GM12878 (cell line): ENCODE measurements at regions of chr12 and their contacts with region 1.

Region 1: GRCh38 chr12:10140001-10140400 is 10.0 kb upstream of the CLEC7A start:
- DNase-seq: peak; percentile 48
- ATAC-seq: peak; percentile 47; the same call in 2 of the 3 replicates
- H3K4me3 ChIP-seq: no peak overlapping the region
- H3K27ac ChIP-seq: no peak overlapping the region
- H3K4me1 ChIP-seq: no peaks in the 10 kb centered on the region
- H3K27me3 ChIP-seq: no peaks in the 10 kb centered on the region; a peak in 1 of 4 replicates
- CTCF ChIP-seq: peak; percentile 47 to 77 (median 57); a peak in 5 of 6 replicates
- EP300 ChIP-seq: no peak
- POLR2A ChIP-seq: no peak
- RAD21 ChIP-seq: peak; percentile 97

Region 2: DNA sequence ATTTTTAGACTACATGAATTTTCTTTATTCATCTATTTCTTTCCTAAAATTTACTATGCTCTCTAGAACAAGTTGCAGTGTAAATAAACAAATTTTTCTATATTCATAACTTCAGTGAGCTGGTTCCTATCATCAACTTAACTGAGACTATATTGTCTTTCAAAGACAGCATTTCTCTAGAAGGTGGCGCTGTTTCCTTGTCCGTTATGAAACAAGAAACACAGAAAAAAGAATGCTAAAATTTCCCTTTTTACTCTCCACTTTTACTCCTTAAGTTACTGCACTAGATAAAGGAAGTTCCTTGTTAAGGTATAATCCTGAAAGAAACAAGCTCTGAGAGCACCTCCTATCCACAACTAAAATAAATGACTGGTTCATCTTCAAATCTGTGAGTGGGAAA is 199.6 kb before region 1 on chr12:
- CTCF ChIA-PET with region 1: interaction called, 13 read pairs
- POLR2A ChIA-PET with region 1: no interaction called
- RAD21 ChIA-PET with region 1: interaction called, 9 read pairs
- SMC1A ChIA-PET with region 1: interaction called, 11 read pairs
- in situ Hi-C with region 1: no loop called
- intact Hi-C with region 1: no loop called
- DNase-seq: no peak
- ATAC-seq: no peak
- H3K4me3 ChIP-seq: no peak overlapping the region
- H3K27ac ChIP-seq: no peak overlapping the region
- H3K4me1 ChIP-seq: no peaks in the 10 kb centered on the region
- H3K27me3 ChIP-seq: peaks cover 0 to 3% of the 10 kb centered on the region in 2 experiments; a peak in 2 of 4 replicates
- CTCF ChIP-seq: peak; percentile 39 to 47 (median 47); a peak in 5 of 6 replicates
- EP300 ChIP-seq: no peak
- POLR2A ChIP-seq: no peak
- RAD21 ChIP-seq: peak; percentile 61

Region 3: GRCh38 chr12:10016881-10017280 is 123.1 kb before region 1 on chr12:
- CTCF ChIA-PET with region 1: interaction called, 5 read pairs
- POLR2A ChIA-PET with region 1: no interaction called
- RAD21 ChIA-PET with region 1: no interaction called
- SMC1A ChIA-PET with region 1: interaction called, 19 read pairs
- in situ Hi-C with region 1: no loop called
- intact Hi-C with region 1: no loop called
- DNase-seq: no peak
- ATAC-seq: no peak
- H3K4me3 ChIP-seq: no peak overlapping the region
- H3K27ac ChIP-seq: no peak overlapping the region
- H3K4me1 ChIP-seq: no peaks in the 10 kb centered on the region
- H3K27me3 ChIP-seq: peaks cover 0 to 4% of the 10 kb centered on the region in 2 experiments; a peak in 1 of 4 replicates
- CTCF ChIP-seq: no peak
- EP300 ChIP-seq: no peak
- POLR2A ChIP-seq: no peak
- RAD21 ChIP-seq: no peak

Region 4: GRCh38 chr12:10033783-10034545 is 106.0 kb before region 1 on chr12:
- CTCF ChIA-PET with region 1: interaction called, 15 read pairs
- POLR2A ChIA-PET with region 1: no interaction called
- RAD21 ChIA-PET with region 1: interaction called, 8 read pairs
- SMC1A ChIA-PET with region 1: interaction called, 21 read pairs
- in situ Hi-C with region 1: loop called (anchors 5 kb)
- intact Hi-C with region 1: loop called (anchors 1 kb)
- DNase-seq: no peak
- ATAC-seq: no peak
- H3K4me3 ChIP-seq: no peak overlapping the region
- H3K27ac ChIP-seq: no peak overlapping the region
- H3K4me1 ChIP-seq: no peaks in the 10 kb centered on the region
- H3K27me3 ChIP-seq: no peaks in the 10 kb centered on the region; a peak in 1 of 4 replicates
- CTCF ChIP-seq: peak; percentile 19 to 49 (median 32); a peak in 4 of 6 replicates
- EP300 ChIP-seq: no peak
- POLR2A ChIP-seq: no peak
- RAD21 ChIP-seq: peak; percentile 69

Region 5: GRCh38 chr12:10058387-10058786 is 81.6 kb before region 1 on chr12:
- CTCF ChIA-PET with region 1: no interaction called
- POLR2A ChIA-PET with region 1: no interaction called
- RAD21 ChIA-PET with region 1: no interaction called
- SMC1A ChIA-PET with region 1: no interaction called
- in situ Hi-C with region 1: no loop called
- intact Hi-C with region 1: no loop called
- DNase-seq: no peak
- ATAC-seq: no peak
- H3K4me3 ChIP-seq: no peak overlapping the region
- H3K27ac ChIP-seq: no peak overlapping the region
- H3K4me1 ChIP-seq: no peaks in the 10 kb centered on the region
- H3K27me3 ChIP-seq: no peaks in the 10 kb centered on the region
- CTCF ChIP-seq: no peak
- EP300 ChIP-seq: no peak
- POLR2A ChIP-seq: no peak
- RAD21 ChIP-seq: no peak

Region 6: GRCh38 chr12:10153271-10154144 is 13.5 kb after region 1 on chr12:
- CTCF ChIA-PET with region 1: interaction called, 26 read pairs
- POLR2A ChIA-PET with region 1: no interaction called
- RAD21 ChIA-PET with region 1: no interaction called
- SMC1A ChIA-PET with region 1: interaction called, 7 read pairs
- in situ Hi-C with region 1: no loop called
- intact Hi-C with region 1: no loop called
- DNase-seq: no peak
- ATAC-seq: peak; percentile 84
- H3K4me3 ChIP-seq: peak overlapping the region; percentile 67
- H3K27ac ChIP-seq: 0 out of 2 replicates have a peak overlapping the region, but pooled peaks have one; percentile 6
- H3K4me1 ChIP-seq: 0 out of 2 replicates have a peak, but pooled peaks cover 4% of the 10 kb centered on the region
- H3K27me3 ChIP-seq: peaks cover 0 to 5% of the 10 kb centered on the region in 2 experiments; a peak in 2 of 4 replicates
- CTCF ChIP-seq: peak; percentile 71 to 80 (median 76)
- EP300 ChIP-seq: no peak
- POLR2A ChIP-seq: no peak
- RAD21 ChIP-seq: peak; percentile 70

Region 7: GRCh38 chr12:10409387-10409786 is 269.4 kb after region 1 on chr12 and contains the start of gene KLRC4:
- CTCF ChIA-PET with region 1: no interaction called
- POLR2A ChIA-PET with region 1: no interaction called
- RAD21 ChIA-PET with region 1: no interaction called
- SMC1A ChIA-PET with region 1: no interaction called
- in situ Hi-C with region 1: no loop called
- intact Hi-C with region 1: no loop called
- DNase-seq: no peak
- ATAC-seq: peak; percentile 51
- H3K4me3 ChIP-seq: no peak within 1 kb of the TSS
- H3K27ac ChIP-seq: no peak within 1 kb of the TSS
- H3K4me1 ChIP-seq: no peaks in the 10 kb centered on the region; the same call in 1 of the 2 replicates
- H3K27me3 ChIP-seq: no peaks in the 10 kb centered on the region
- CTCF ChIP-seq: no peak
- EP300 ChIP-seq: no peak
- POLR2A ChIP-seq: no peak
- RAD21 ChIP-seq: no peak
- polyA plus RNA-seq, gene KLRC4: 0.34 TPM in 1 of 2 experiments, not detected in the other